H1 (cell line): ENCODE measurements at regions of chr4 and their contacts with region 1.

Region 1: GRCh38 chr4:22897520-22898108 is 204.9 kb downstream of the GBA3 start:
- DNase-seq: peak; percentile 29 to 63
- H3K4me3 ChIP-seq: no peak overlapping the region
- H3K27ac ChIP-seq: no peak overlapping the region
- H3K4me1 ChIP-seq: no peaks in the 10 kb centered on the region
- H3K27me3 ChIP-seq: no peaks in the 10 kb centered on the region
- CTCF ChIP-seq: peak in 2 of 3 experiments; percentile 54 to 63; a peak in 2 of 4 replicates
- EP300 ChIP-seq: no peak
- POLR2A ChIP-seq: no peak
- RAD21 ChIP-seq: peak; percentile 71 to 72

Region 2: GRCh38 chr4:22490718-22491315 is 406.8 kb before region 1 on chr4:
- CTCF ChIA-PET with region 1: no interaction called
- POLR2A ChIA-PET with region 1: no interaction called
- DNase-seq: no peak
- H3K4me3 ChIP-seq: no peak overlapping the region
- H3K27ac ChIP-seq: 0 out of 2 replicates have a peak overlapping the region, but pooled peaks have one; percentile 20
- H3K4me1 ChIP-seq: peaks cover 0 to 13% (median 8%) of the 10 kb centered on the region in 4 experiments; a peak in 4 of 7 replicates
- H3K27me3 ChIP-seq: no peaks in the 10 kb centered on the region
- CTCF ChIP-seq: no peak
- EP300 ChIP-seq: no peak
- POLR2A ChIP-seq: no peak
- RAD21 ChIP-seq: no peak

Region 3: DNA sequence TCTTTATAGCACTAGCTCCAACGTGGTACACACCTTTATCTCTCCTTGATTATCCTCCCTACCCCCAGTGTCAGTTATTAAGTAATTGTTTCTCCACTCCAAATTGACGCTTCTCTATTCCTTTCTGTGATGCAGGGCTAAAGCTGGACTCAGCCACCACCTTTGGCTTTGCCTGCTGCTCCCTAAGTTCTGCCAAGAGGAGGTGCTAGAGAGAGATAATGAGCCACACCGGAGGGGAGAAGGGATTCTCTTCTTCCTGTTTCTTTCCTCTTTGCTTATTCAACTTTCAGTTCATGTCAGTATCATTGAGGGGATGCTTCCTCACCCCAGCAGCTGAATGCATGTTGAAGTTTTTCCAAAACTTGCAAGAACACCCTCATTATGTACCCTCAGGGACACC is 28.4 kb before region 1 on chr4:
- CTCF ChIA-PET with region 1: interaction called, 27 read pairs
- POLR2A ChIA-PET with region 1: no interaction called
- DNase-seq: no peak
- H3K4me3 ChIP-seq: no peak overlapping the region
- H3K27ac ChIP-seq: no peak overlapping the region
- H3K4me1 ChIP-seq: no peaks in the 10 kb centered on the region
- H3K27me3 ChIP-seq: no peaks in the 10 kb centered on the region
- CTCF ChIP-seq: peak; percentile 46 to 72 (median 49)
- EP300 ChIP-seq: no peak
- POLR2A ChIP-seq: no peak
- RAD21 ChIP-seq: peak; percentile 40 to 51; a peak in 3 of 4 replicates

Region 4: GRCh38 chr4:22874334-22874912 is 23.2 kb before region 1 on chr4:
- CTCF ChIA-PET with region 1: interaction called, 27 read pairs
- POLR2A ChIA-PET with region 1: no interaction called
- DNase-seq: no peak
- H3K4me3 ChIP-seq: no peak overlapping the region
- H3K27ac ChIP-seq: no peak overlapping the region
- H3K4me1 ChIP-seq: no peaks in the 10 kb centered on the region
- H3K27me3 ChIP-seq: no peaks in the 10 kb centered on the region
- CTCF ChIP-seq: no peak
- EP300 ChIP-seq: no peak
- POLR2A ChIP-seq: no peak
- RAD21 ChIP-seq: no peak

Region 5: GRCh38 chr4:22911285-22911684 is 13.7 kb after region 1 on chr4:
- CTCF ChIA-PET with region 1: interaction called, 21 read pairs
- POLR2A ChIA-PET with region 1: no interaction called
- DNase-seq: no peak
- H3K4me3 ChIP-seq: no peak overlapping the region
- H3K27ac ChIP-seq: no peak overlapping the region
- H3K4me1 ChIP-seq: no peaks in the 10 kb centered on the region
- H3K27me3 ChIP-seq: no peaks in the 10 kb centered on the region
- CTCF ChIP-seq: no peak
- EP300 ChIP-seq: no peak
- POLR2A ChIP-seq: no peak
- RAD21 ChIP-seq: no peak

Region 6: DNA sequence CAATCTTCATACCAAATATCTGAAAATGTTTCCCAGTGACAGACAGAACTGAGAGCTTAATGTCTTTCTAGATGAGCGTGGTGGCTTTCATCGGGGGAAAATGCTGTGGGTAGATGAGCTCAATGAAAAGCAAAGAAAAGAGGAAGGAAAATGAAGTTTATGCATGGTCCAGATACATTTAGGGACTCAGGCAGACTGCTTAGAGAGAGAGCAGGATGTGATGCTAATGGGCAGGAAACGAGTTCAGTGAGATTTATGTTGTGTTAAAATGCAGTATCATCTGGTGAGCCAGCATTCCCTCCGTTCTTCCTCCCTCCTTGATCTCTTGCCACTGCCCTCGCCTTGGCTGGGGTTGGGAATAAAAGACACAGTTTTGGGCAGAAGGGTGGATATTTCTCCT is 24.3 kb after region 1 on chr4:
- CTCF ChIA-PET with region 1: interaction called, 11 read pairs
- POLR2A ChIA-PET with region 1: no interaction called
- DNase-seq: no peak
- H3K4me3 ChIP-seq: no peak overlapping the region
- H3K27ac ChIP-seq: no peak overlapping the region
- H3K4me1 ChIP-seq: no peaks in the 10 kb centered on the region
- H3K27me3 ChIP-seq: no peaks in the 10 kb centered on the region
- CTCF ChIP-seq: no peak
- EP300 ChIP-seq: no peak
- POLR2A ChIP-seq: no peak
- RAD21 ChIP-seq: no peak

Region 7: GRCh38 chr4:22949161-22949855 is 51.7 kb after region 1 on chr4:
- CTCF ChIA-PET with region 1: interaction called, 10 read pairs
- POLR2A ChIA-PET with region 1: no interaction called
- DNase-seq: no peak
- H3K4me3 ChIP-seq: no peak overlapping the region
- H3K27ac ChIP-seq: no peak overlapping the region
- H3K4me1 ChIP-seq: no peaks in the 10 kb centered on the region
- H3K27me3 ChIP-seq: peaks cover 0 to 1% (median under 1%) of the 10 kb centered on the region in 4 experiments; a peak in 3 of 7 replicates
- CTCF ChIP-seq: no peak
- EP300 ChIP-seq: no peak
- POLR2A ChIP-seq: no peak
- RAD21 ChIP-seq: no peak

Region 8: GRCh38 chr4:23022032-23022431 is 124.4 kb after region 1 on chr4:
- CTCF ChIA-PET with region 1: no interaction called
- POLR2A ChIA-PET with region 1: no interaction called
- DNase-seq: no peak
- H3K4me3 ChIP-seq: no peak overlapping the region
- H3K27ac ChIP-seq: no peak overlapping the region
- H3K4me1 ChIP-seq: no peaks in the 10 kb centered on the region
- H3K27me3 ChIP-seq: no peaks in the 10 kb centered on the region
- CTCF ChIP-seq: no peak
- EP300 ChIP-seq: no peak
- POLR2A ChIP-seq: no peak
- RAD21 ChIP-seq: no peak

Region 9: GRCh38 chr4:23202712-23203247 is 305.2 kb after region 1 on chr4:
- CTCF ChIA-PET with region 1: no interaction called
- POLR2A ChIA-PET with region 1: no interaction called
- DNase-seq: no peak
- H3K4me3 ChIP-seq: no peak overlapping the region
- H3K27ac ChIP-seq: no peak overlapping the region
- H3K4me1 ChIP-seq: no peaks in the 10 kb centered on the region; a peak in 1 of 7 replicates
- H3K27me3 ChIP-seq: no peaks in the 10 kb centered on the region
- CTCF ChIP-seq: no peak
- EP300 ChIP-seq: no peak
- POLR2A ChIP-seq: no peak
- RAD21 ChIP-seq: no peak

Region 10: GRCh38 chr4:23697722-23698121 is 800.1 kb after region 1 on chr4:
- CTCF ChIA-PET with region 1: no interaction called
- POLR2A ChIA-PET with region 1: no interaction called
- DNase-seq: no peak
- H3K4me3 ChIP-seq: no peak overlapping the region
- H3K27ac ChIP-seq: no peak overlapping the region
- H3K4me1 ChIP-seq: no peaks in the 10 kb centered on the region
- H3K27me3 ChIP-seq: no peaks in the 10 kb centered on the region
- CTCF ChIP-seq: no peak
- EP300 ChIP-seq: no peak
- POLR2A ChIP-seq: no peak
- RAD21 ChIP-seq: no peak